Activated CD4-positive, alpha-beta memory T cell treated with anti-CD3 and anti-CD28 coated beads for 36 hours (primary cell): ENCODE measurements at regions of chr17 and their contacts with region 1.

Region 1: DNA sequence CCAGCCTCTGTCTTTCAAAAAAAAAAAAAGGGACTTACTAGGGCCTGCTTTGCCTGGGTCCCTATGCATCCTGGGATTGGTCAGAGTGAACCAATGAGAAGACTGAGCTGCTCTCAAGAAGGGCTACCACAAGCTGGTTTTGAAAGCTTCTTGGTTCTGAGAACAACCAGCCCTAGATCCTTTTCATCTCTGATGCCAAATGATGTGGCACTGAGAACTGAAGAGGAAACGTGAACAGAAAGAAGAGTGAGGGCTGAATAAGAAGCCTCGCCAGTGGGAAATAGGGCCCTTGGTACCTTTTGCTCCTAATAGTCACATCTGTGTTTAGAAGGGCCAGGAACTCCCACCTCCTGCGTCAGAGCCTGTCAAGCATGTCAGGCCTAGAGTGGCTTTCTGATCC is 10.7 kb downstream of the TACO1 start:
- DNase-seq: peak; percentile 75
- H3K4me3 Mint-ChIP-seq: peak overlapping the region; percentile 64
- H3K27ac Mint-ChIP-seq: peak overlapping the region; percentile 97
- H3K4me1 Mint-ChIP-seq: peaks cover 29% of the 10 kb centered on the region
- H3K27me3 Mint-ChIP-seq: no peaks in the 10 kb centered on the region

Region 2: GRCh38 chr17:63406689-63407330 is 204.5 kb before region 1 on chr17:
- CTCF ChIA-PET with region 1: interaction called, 17 read pairs
- POLR2A ChIA-PET with region 1: interaction called, 4 read pairs
- intact Hi-C with region 1: no loop called
- DNase-seq: peak; percentile 74
- H3K4me3 Mint-ChIP-seq: no peak overlapping the region
- H3K27ac Mint-ChIP-seq: no peak overlapping the region
- H3K4me1 Mint-ChIP-seq: peaks cover 11% of the 10 kb centered on the region
- H3K27me3 Mint-ChIP-seq: no peaks in the 10 kb centered on the region

Region 3: GRCh38 chr17:63425482-63425881 is 185.9 kb before region 1 on chr17:
- CTCF ChIA-PET with region 1: interaction called, 243 read pairs
- POLR2A ChIA-PET with region 1: interaction called, 4 read pairs
- intact Hi-C with region 1: loop called (anchors 1 kb)
- DNase-seq: peak; percentile 79
- H3K4me3 Mint-ChIP-seq: no peak overlapping the region
- H3K27ac Mint-ChIP-seq: no peak overlapping the region
- H3K4me1 Mint-ChIP-seq: peaks cover 33% of the 10 kb centered on the region
- H3K27me3 Mint-ChIP-seq: no peaks in the 10 kb centered on the region

Region 4: GRCh38 chr17:63445979-63446691 is 165.2 kb before region 1 on chr17 and contains the start of gene CYB561:
- CTCF ChIA-PET with region 1: interaction called, 42 read pairs
- POLR2A ChIA-PET with region 1: interaction called, 5 read pairs
- intact Hi-C with region 1: no loop called
- DNase-seq: peak; percentile 81
- H3K4me3 Mint-ChIP-seq: peak within 1 kb of the TSS; percentile 70
- H3K27ac Mint-ChIP-seq: peak within 1 kb of the TSS; percentile 89
- H3K4me1 Mint-ChIP-seq: peaks cover 38% of the 10 kb centered on the region
- H3K27me3 Mint-ChIP-seq: peaks cover 1% of the 10 kb centered on the region
- total RNA-seq, gene CYB561: 9.4 to 9.7 TPM

Region 5: DNA sequence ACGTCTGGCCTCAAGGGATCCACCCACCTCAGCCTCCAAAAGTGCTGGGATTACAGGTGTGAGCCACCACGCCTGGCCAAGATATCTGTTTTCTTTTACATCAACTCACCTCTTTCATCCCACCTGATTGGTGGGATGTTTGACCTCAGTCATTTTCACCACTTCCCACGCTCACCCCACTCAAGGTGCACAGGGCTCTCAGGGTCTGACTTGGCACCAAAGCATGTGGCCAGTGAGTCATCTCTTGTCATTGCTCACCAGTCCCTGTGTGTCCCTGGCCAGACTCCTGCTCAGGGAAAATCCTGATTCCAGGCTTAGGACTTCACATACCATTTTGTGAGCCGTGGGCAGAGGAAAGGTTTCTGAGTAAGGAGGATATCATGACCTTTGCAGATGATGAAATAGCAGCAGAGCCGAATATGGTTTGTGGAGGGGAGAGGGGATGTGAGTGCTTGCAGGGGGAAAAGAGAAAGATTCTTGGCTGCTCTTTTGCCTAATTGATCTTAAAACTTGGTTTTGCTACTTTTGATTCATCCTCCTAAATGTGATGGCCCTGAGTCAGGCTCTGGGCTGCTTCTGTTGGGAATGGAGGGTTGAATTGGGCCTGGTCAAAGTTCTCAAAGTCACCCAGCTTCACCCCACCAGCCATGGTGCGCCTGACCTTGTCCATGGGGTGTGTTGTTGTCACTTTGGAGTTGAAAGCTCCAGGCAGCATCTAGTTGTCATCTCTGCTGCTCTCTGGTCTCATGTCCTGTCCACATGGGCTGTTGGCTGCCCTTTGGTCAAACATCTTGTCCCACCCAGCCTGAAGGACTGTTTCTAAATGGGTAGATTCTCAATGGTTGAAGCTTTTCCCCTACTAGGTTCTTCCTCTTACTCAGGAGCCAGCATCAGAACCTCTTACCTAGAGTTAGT is 94.2 kb before region 1 on chr17:
- CTCF ChIA-PET with region 1: interaction called, 3 read pairs
- POLR2A ChIA-PET with region 1: no interaction called
- intact Hi-C with region 1: loop called (anchors 5 kb)
- DNase-seq: peak; percentile 77
- H3K4me3 Mint-ChIP-seq: no peak overlapping the region
- H3K27ac Mint-ChIP-seq: no peak overlapping the region
- H3K4me1 Mint-ChIP-seq: peaks cover 18% of the 10 kb centered on the region
- H3K27me3 Mint-ChIP-seq: peaks cover 8% of the 10 kb centered on the region

Region 6: DNA sequence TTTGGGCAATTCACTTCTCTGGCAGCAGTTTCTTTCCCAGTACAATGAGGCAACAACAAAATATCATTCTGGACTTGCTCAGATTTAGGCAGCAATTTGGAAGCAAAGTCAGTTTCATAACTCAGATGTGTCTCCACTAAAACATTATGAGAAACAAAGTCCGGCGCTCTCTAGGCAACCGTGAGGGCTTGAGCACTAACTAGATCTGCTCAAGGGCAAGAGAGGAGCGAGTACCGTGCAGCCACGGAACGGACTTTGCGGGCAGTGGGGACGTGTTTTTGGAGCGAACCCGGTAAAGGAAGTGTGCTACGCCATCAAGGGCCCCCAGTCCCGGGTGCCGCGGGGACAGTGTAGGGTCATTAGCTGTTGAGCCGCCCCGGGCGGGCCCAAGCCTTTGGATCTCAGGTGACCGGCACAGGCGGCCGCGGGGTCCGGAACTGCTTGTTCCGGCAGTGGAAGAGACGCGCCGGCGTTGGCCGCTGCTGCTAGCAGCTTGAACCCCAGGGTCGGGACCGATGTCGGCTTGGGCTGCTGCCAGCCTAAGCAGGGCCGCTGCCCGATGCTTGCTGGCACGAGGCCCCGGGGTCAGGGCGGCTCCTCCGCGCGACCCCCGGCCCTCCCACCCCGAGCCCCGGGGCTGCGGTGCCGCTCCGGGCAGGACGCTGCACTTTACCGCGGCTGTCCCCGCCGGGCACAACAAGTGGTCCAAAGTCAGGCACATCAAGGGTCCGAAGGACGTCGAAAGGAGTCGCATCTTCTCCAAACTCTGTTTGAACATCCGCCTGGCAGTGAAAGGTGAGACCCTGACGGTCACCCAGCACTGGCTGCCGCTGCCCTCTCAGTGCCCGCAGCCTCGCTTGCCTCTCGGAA is 10.6 kb before region 1 on chr17 and contains the start of gene TACO1:
- CTCF ChIA-PET with region 1: interaction called, 22 read pairs
- POLR2A ChIA-PET with region 1: interaction called, 7 read pairs
- intact Hi-C with region 1: loop called (anchors 1 kb)
- DNase-seq: peak; percentile 88
- H3K4me3 Mint-ChIP-seq: peak within 1 kb of the TSS; percentile 86
- H3K27ac Mint-ChIP-seq: peak within 1 kb of the TSS; percentile 86
- H3K4me1 Mint-ChIP-seq: peaks cover 39% of the 10 kb centered on the region
- H3K27me3 Mint-ChIP-seq: no peaks in the 10 kb centered on the region
- total RNA-seq, gene TACO1: 28.2 to 30.4 TPM

Region 7: GRCh38 chr17:63634163-63634562 is 22.8 kb after region 1 on chr17:
- CTCF ChIA-PET with region 1: interaction called, 12 read pairs
- POLR2A ChIA-PET with region 1: no interaction called
- intact Hi-C with region 1: no loop called
- DNase-seq: no peak
- H3K4me3 Mint-ChIP-seq: no peak overlapping the region
- H3K27ac Mint-ChIP-seq: no peak overlapping the region
- H3K4me1 Mint-ChIP-seq: peaks cover 22% of the 10 kb centered on the region
- H3K27me3 Mint-ChIP-seq: no peaks in the 10 kb centered on the region

Region 8: DNA sequence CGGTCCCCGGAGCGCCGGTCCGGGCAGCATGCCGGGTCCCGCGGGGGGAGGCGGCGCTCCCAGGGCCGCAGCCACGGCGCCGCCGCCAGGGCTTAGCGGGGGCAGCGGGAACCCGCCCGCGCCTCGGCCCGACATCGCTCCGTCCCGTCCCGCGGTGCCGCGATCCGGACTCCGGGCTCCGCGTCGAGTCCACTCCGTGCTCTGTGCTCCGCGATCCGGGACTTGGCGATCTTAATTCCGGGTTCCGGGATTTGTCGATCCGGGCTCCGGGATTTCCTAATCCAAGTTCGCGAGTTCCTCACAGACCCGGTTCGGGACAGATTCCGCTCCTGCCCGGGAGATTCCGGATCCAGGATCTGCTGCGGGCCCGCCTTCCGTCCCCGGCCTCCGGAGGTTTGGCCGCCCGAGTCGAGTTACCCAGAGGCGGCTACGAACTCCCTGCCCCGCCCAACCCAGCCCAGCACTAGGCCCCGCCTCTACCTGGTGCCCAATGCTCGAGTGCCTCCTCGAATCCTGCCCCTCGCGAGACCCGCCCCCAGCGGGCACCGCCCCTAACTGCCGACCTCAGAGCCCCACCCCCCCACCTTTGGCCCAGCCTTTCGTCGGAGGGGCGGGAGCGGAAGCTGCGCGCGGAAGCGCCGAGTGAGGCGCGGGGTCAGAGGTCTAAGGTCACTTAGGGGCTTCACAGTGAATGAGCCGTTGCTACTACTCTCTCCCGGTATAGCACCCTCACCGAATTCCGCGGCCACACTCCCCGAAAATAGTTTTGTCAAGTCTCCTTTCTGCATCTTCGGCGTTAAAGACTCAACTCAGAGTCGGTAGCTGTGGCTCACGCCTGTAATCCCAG is 231.4 kb after region 1 on chr17 and contains the start of gene SMARCD2:
- CTCF ChIA-PET with region 1: no interaction called
- POLR2A ChIA-PET with region 1: no interaction called
- intact Hi-C with region 1: no loop called
- DNase-seq: peak; percentile 100
- H3K4me3 Mint-ChIP-seq: peak within 1 kb of the TSS; percentile 95
- H3K27ac Mint-ChIP-seq: peak within 1 kb of the TSS; percentile 95
- H3K4me1 Mint-ChIP-seq: peaks cover 34% of the 10 kb centered on the region
- H3K27me3 Mint-ChIP-seq: no peaks in the 10 kb centered on the region
- total RNA-seq, gene SMARCD2: 109 to 111 TPM

Region 9: DNA sequence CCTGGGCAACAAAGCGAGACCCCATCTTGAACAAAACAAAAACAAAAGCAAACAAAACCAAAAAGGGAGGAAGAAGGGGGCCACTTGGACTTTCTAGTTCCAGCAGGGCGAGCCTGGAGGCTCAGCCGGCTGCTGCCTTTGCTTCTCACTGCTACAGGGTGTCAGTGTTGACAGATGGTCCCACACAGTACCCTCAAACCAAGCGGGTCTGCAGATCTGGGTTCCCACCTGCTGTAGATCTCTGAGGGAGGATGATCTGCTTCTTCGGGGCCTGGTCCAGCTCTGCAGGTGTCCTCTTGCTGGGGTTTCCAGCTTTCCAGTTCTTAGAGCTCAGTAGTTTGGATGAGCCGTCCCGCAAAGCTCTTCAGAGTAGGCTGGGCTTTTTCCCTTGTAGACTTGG is 293.0 kb after region 1 on chr17:
- CTCF ChIA-PET with region 1: no interaction called
- POLR2A ChIA-PET with region 1: no interaction called
- intact Hi-C with region 1: no loop called
- DNase-seq: no peak
- H3K4me3 Mint-ChIP-seq: no peak overlapping the region
- H3K27ac Mint-ChIP-seq: no peak overlapping the region
- H3K4me1 Mint-ChIP-seq: peaks cover 11% of the 10 kb centered on the region
- H3K27me3 Mint-ChIP-seq: no peaks in the 10 kb centered on the region